ENCODE measurements at regions of chr11 and their contacts with region 1.

Region 1: GRCh38 chr11:27183672-27184457 is 143.2 kb downstream of the BBOX1 start:
- DNase-seq: peak in 2 of 3 donors; percentile 46 to 72
- ATAC-seq: peak; percentile 62 to 65
- H3K4me3 ChIP-seq: no peak overlapping the region
- H3K27ac ChIP-seq: no peak overlapping the region
- H3K4me1 ChIP-seq: no peaks in the 10 kb centered on the region
- H3K27me3 ChIP-seq: no peaks in the 10 kb centered on the region

Region 2: GRCh38 chr11:26841818-26842473 is 341.9 kb before region 1 on chr11:
- intact Hi-C with region 1: no loop called
- DNase-seq: no peak
- ATAC-seq: peak; percentile 32 to 62
- H3K4me3 ChIP-seq: no peak overlapping the region
- H3K27ac ChIP-seq: peak overlapping the region; percentile 37
- H3K4me1 ChIP-seq: no peaks in the 10 kb centered on the region
- H3K27me3 ChIP-seq: no peaks in the 10 kb centered on the region

Region 3: GRCh38 chr11:27234043-27234668 is 50.3 kb after region 1 on chr11:
- intact Hi-C with region 1: no loop called
- DNase-seq: peak; percentile 60 to 72 (median 71)
- ATAC-seq: peak; percentile 82 to 86
- H3K4me3 ChIP-seq: no peak overlapping the region
- H3K27ac ChIP-seq: peak overlapping the region; percentile 3
- H3K4me1 ChIP-seq: no peaks in the 10 kb centered on the region
- H3K27me3 ChIP-seq: no peaks in the 10 kb centered on the region

Region 4: GRCh38 chr11:27296497-27296896 is 112.6 kb after region 1 on chr11:
- intact Hi-C with region 1: loop called in 2 of 4 experiments (anchors 5 kb)
- DNase-seq: no peak
- ATAC-seq: peak; percentile 71 to 79
- H3K4me3 ChIP-seq: no peak overlapping the region
- H3K27ac ChIP-seq: no peak overlapping the region
- H3K4me1 ChIP-seq: no peaks in the 10 kb centered on the region
- H3K27me3 ChIP-seq: no peaks in the 10 kb centered on the region

Region 5: GRCh38 chr11:27392278-27393114 is 208.6 kb after region 1 on chr11:
- intact Hi-C with region 1: loop called in 1 of 4 experiments (anchors 10 kb)
- DNase-seq: no peak
- ATAC-seq: peak; percentile 79 to 81
- H3K4me3 ChIP-seq: no peak overlapping the region
- H3K27ac ChIP-seq: no peak overlapping the region
- H3K4me1 ChIP-seq: peaks cover 9% of the 10 kb centered on the region
- H3K27me3 ChIP-seq: no peaks in the 10 kb centered on the region

Region 6: GRCh38 chr11:27485930-27486773 is 302.3 kb after region 1 on chr11:
- intact Hi-C with region 1: loop called (anchors 2 to 5 kb)
- DNase-seq: no peak
- ATAC-seq: peak; percentile 45 to 50
- H3K4me3 ChIP-seq: no peak overlapping the region
- H3K27ac ChIP-seq: no peak overlapping the region
- H3K4me1 ChIP-seq: no peaks in the 10 kb centered on the region
- H3K27me3 ChIP-seq: no peaks in the 10 kb centered on the region